ENCODE measurements at regions of chr10 and their contacts with region 1.

Region 1: GRCh38 chr10:50739618-50740292 is at the start of gene ASAH2B:
- DNase-seq: peak; percentile 88
- H3K4me3 Mint-ChIP-seq: peak within 1 kb of the TSS; percentile 98
- H3K27ac Mint-ChIP-seq: peak within 1 kb of the TSS; percentile 95
- H3K4me1 Mint-ChIP-seq: peaks cover 16% of the 10 kb centered on the region
- H3K27me3 Mint-ChIP-seq: peaks cover 2% of the 10 kb centered on the region
- total RNA-seq, gene ASAH2B: 3.9 to 4.6 TPM

Region 2: GRCh38 chr10:50561816-50562215 is 177.9 kb before region 1 on chr10:
- CTCF ChIA-PET with region 1: no interaction called
- intact Hi-C with region 1: loop called (anchors 10 kb)
- DNase-seq: no peak
- H3K4me3 Mint-ChIP-seq: no peak overlapping the region
- H3K27ac Mint-ChIP-seq: no peak overlapping the region
- H3K4me1 Mint-ChIP-seq: peaks cover 16% of the 10 kb centered on the region
- H3K27me3 Mint-ChIP-seq: no peaks in the 10 kb centered on the region

Region 3: DNA sequence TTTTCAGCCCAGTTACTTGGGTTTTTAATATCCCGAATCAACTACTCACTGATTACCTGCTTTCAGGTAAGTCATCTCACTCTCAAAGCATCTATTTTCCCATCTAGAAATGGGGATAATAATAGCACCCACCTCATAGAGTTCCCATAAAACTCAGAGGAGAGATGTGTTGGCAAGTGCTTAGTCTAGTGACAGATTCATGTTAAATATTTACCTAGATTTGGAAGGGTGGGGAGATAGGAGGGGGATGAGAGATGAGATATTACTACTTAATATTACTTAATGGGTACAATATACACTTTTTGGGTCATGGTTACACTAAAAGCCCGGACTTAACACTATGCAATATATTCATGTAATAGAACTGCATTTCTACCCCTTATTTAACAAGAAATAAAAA is 152.7 kb after region 1 on chr10:
- CTCF ChIA-PET with region 1: no interaction called
- intact Hi-C with region 1: loop called (anchors 5 kb)
- DNase-seq: no peak
- H3K4me3 Mint-ChIP-seq: no peak overlapping the region
- H3K27ac Mint-ChIP-seq: no peak overlapping the region
- H3K4me1 Mint-ChIP-seq: no peaks in the 10 kb centered on the region
- H3K27me3 Mint-ChIP-seq: peaks cover 14% of the 10 kb centered on the region

Measured in activated naive CD4-positive, alpha-beta T cell treated with anti-CD3 and anti-CD28 coated beads for 36 hours (primary cell).